Activated CD4-positive, alpha-beta T cell treated with anti-CD3 and anti-CD28 coated beads, Interleukin-2, amount 10 ng/mL, durations not matched to agents 24 days and 14 days (primary cell): ENCODE measurements at regions of chr2 and their contacts with region 1.

Region 1: DNA sequence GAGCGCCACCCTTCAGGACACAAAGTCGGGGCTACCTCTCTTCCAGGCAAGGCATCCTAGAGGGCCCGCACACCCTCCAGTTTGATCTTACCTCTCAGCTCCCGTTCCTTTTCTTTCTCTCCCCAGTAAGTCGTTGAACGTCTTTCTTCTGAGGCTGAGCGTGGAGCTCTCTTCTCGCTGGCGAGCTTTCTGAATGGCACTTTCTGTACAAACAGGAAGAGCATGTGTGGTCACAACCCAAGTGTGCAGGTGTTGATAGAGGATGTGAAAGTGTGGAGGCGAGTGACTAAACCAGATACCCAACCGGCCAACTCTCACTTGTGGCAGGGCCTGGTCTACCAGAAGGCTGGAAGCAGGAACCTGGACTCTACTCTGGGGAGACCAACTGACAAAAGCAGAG is at the start of gene AFF3:
- DNase-seq: peak; percentile 86
- H3K4me3 Mint-ChIP-seq: peak within 1 kb of the TSS; percentile 88
- H3K27ac Mint-ChIP-seq: peak within 1 kb of the TSS; percentile 83
- H3K4me1 Mint-ChIP-seq: peaks cover 40% of the 10 kb centered on the region
- H3K27me3 Mint-ChIP-seq: peaks cover 28% of the 10 kb centered on the region
- total RNA-seq, gene AFF3: 5.7 and 5.9 TPM in 2 replicates

Region 2: GRCh38 chr2:100104718-100105677 is 37.4 kb before region 1 on chr2:
- intact Hi-C with region 1: loop called (anchors 5 kb)
- DNase-seq: peak; percentile 61
- H3K4me3 Mint-ChIP-seq: peak overlapping the region; percentile 75
- H3K27ac Mint-ChIP-seq: no peak overlapping the region
- H3K4me1 Mint-ChIP-seq: peaks cover 6% of the 10 kb centered on the region
- H3K27me3 Mint-ChIP-seq: peaks cover 24% of the 10 kb centered on the region

Region 3: GRCh38 chr2:100291120-100291970 is 149.0 kb after region 1 on chr2:
- intact Hi-C with region 1: loop called (anchors 5 kb)
- DNase-seq: peak; percentile 90
- H3K4me3 Mint-ChIP-seq: no peak overlapping the region
- H3K27ac Mint-ChIP-seq: no peak overlapping the region
- H3K4me1 Mint-ChIP-seq: peaks cover 6% of the 10 kb centered on the region
- H3K27me3 Mint-ChIP-seq: peaks cover 16% of the 10 kb centered on the region